A549 (cell line): ENCODE measurements at regions of chr2 and their contacts with region 1.

Region 1: GRCh38 chr2:68487773-68488355 is 20.5 kb downstream of the APLF start:
- DNase-seq: peak; percentile 21 to 41
- ATAC-seq: peak in 1 of 2 experiments; percentile 82; a peak in 4 of 6 replicates
- H3K4me3 ChIP-seq: no peak overlapping the region
- H3K27ac ChIP-seq: no peak overlapping the region
- H3K4me1 ChIP-seq: no peaks in the 10 kb centered on the region
- CTCF ChIP-seq: peak; percentile 71; the same call in 2 of the 3 replicates
- EP300 ChIP-seq: no peak
- POLR2A ChIP-seq: no peak
- RAD21 ChIP-seq: peak; percentile 65 to 74

Region 2: DNA sequence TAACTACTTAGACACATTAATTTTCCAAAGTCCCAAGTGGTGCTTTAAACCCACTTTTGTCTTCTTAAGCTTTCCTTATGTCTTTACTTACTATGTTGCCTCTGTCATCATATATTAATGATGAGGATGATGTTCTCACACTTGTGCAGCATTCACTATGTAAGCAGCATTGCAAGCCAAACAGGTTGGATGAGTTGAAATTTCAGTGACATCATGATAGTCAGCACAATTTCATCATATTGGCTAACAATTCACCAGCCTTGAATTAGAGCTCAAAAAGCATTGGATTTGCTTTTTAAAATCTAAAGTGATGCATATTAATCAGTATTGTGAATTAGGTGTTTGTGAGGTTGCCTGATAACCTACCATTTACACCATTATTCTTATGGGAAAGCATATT is 12.8 kb before region 1 on chr2:
- CTCF ChIA-PET with region 1: interaction called, 12 read pairs
- POLR2A ChIA-PET with region 1: no interaction called
- DNase-seq: no peak
- ATAC-seq: no peak
- H3K4me3 ChIP-seq: no peak overlapping the region
- H3K27ac ChIP-seq: no peak overlapping the region
- H3K4me1 ChIP-seq: no peaks in the 10 kb centered on the region
- CTCF ChIP-seq: no peak
- EP300 ChIP-seq: no peak
- POLR2A ChIP-seq: no peak
- RAD21 ChIP-seq: no peak

Region 3: DNA sequence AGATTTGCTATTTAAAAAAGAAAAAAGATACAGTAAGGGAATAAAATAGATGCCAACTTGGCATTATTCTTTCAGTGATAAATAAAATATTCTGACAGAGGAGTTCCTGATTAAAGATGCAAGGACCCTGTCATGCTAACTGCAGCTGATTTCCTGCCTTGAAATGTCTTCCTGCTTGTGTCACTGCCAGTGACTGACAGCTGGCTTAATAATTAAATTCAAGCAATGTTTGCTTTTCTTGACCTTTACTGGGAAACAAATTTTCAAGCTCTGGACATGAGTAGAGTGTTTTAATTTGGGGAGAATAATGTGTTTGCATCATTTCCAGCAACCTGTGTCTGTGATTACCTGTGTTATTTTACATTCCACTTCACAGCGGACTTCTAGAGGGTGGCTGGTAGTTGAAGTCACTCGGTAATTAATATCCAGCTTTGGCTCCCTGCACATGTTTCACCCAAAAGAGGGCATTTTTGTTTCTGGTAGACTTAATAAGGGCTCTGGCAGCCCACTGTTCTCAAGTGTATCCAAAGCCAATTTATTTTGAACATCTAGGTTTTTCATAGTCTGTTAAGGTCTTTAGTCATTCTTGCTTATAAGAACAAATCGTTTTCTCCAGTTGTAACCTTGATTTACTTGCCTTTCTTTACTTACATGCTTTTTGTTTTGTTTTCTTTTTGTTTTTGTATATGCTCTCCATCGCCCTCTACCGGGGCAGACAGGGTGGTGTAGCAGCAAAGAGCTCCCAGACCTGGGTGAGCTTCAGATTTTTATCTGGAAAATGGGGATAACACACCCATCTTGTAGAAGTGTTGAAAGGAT is 107.0 kb after region 1 on chr2:
- CTCF ChIA-PET with region 1: interaction called, 13 read pairs
- POLR2A ChIA-PET with region 1: no interaction called
- DNase-seq: peak; percentile 19 to 59
- ATAC-seq: peak; percentile 70 to 89; a peak in 4 of 6 replicates
- H3K4me3 ChIP-seq: no peak overlapping the region
- H3K27ac ChIP-seq: no peak overlapping the region
- H3K4me1 ChIP-seq: peaks cover 8% of the 10 kb centered on the region; the same call in 2 of the 3 replicates
- CTCF ChIP-seq: peak; percentile 80
- EP300 ChIP-seq: no peak
- POLR2A ChIP-seq: no peak
- RAD21 ChIP-seq: peak; percentile 46 to 50; a peak in 4 of 5 replicates

Region 4: DNA sequence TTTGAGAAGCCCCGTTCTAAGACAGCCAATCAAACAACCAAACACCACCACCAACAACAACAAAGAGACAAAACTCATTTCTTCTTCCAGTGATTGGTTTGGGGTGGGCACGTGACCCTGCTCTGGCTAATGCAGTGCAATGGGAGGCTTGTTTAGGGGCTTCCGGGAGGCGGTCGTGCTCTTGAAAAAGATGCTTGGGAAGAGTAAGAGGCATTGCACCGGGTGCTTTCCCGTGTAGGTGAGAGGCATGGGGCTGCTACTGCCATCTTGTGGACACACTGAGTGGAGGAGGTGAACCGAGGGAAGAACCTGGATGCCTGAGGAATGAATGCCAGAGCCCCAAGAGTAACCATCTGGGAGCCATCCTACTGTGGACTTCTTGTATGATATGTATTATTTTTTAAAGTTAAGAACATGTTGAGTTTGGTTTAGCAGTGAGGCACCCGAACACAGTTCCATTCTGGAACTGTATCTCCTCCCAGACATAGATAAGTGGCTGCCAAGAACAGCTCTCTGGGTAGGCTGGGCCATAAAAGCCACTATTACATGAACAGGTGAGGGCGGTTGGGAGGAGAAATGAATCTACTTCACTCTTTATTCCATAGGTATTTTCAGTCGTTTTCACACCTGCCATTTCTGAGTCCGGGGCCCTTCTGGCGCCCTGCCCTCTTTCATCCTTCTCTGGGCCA is 227.6 kb after region 1 on chr2:
- CTCF ChIA-PET with region 1: interaction called, 12 read pairs
- POLR2A ChIA-PET with region 1: no interaction called
- DNase-seq: peak; percentile 76 to 81
- ATAC-seq: peak; percentile 96 to 99
- H3K4me3 ChIP-seq: no peak overlapping the region
- H3K27ac ChIP-seq: no peak overlapping the region
- H3K4me1 ChIP-seq: no peaks in the 10 kb centered on the region; the same call in 2 of the 3 replicates
- CTCF ChIP-seq: peak; percentile 81
- EP300 ChIP-seq: no peak
- POLR2A ChIP-seq: no peak
- RAD21 ChIP-seq: peak; percentile 60 to 67